GM10248 (cell line): ENCODE measurements at regions of chr7 and their contacts with region 1.

Region 1: GRCh38 chr7:157250605-157251228 is 86.1 kb upstream of the DNAJB6 start:
- DNase-seq: peak; percentile 65
- CTCF ChIP-seq: peak; percentile 76

Region 2: GRCh38 chr7:156969972-156970420 is 280.7 kb before region 1 on chr7:
- CTCF ChIA-PET with region 1: interaction called, 29 read pairs
- POLR2A ChIA-PET with region 1: no interaction called
- DNase-seq: no peak
- CTCF ChIP-seq: peak; percentile 0

Region 3: DNA sequence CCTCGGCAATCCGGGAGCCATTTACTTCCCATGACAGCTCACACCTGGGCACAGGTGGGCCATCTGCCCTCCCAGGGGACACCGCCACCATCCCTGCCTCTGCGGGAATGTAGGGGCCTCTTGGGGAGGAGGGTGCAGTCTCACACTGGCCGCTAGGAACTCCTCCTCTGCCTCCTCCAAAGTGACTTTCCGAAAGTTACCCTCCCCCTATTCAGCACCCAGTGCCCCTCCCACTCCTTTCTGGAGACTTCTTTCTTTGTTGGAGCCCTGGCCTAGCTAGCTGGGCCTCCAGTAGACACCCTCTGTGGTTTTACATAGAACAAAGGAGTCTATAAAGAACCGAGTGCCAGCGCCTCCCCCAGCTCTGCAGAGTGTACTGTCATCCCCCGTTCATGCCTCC is 194.5 kb before region 1 on chr7:
- CTCF ChIA-PET with region 1: no interaction called
- POLR2A ChIA-PET with region 1: no interaction called
- DNase-seq: no peak
- CTCF ChIP-seq: no peak

Region 4: DNA sequence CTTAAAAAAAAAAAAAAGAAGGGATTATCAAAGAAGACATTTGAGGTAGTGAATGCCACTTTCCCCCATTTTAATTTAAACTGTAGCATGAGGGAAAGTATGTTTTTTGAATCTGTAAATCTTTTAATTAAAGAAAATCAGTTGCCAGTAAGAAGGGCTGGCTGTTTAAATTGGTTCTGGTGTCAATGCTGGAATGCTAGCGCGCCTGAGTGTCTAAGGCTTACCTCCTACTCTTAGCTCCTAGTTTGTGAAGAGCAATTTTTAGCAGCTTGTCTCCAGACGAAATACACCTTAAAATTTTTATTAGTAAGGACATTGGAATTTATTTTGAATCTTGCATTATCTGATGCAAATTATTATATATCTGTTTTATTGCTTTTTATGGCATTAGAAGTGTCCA is 57.9 kb before region 1 on chr7:
- CTCF ChIA-PET with region 1: no interaction called
- POLR2A ChIA-PET with region 1: no interaction called
- DNase-seq: no peak
- CTCF ChIP-seq: no peak

Region 5: DNA sequence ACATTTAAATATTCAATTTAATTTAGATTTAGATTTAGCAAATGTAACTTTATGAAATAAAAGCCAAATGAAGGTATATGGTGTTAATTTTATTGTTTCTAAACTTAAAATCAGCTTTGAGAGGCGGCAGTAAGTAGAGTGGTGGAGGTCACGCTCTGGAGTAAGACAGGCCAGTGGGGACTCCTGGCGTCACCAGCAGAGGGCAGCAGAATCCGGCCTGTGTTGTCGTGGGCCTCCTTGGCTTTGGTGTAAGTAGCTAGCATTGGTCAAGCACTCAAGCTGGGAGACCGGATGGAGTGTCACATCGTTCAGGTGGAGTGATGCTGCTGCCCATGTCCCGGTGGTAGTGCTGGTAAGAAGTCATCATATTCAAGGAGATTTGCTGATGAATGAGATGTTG is 12.6 kb before region 1 on chr7:
- CTCF ChIA-PET with region 1: interaction called, 21 read pairs
- POLR2A ChIA-PET with region 1: no interaction called
- DNase-seq: no peak
- CTCF ChIP-seq: peak; percentile 4

Region 6: DNA sequence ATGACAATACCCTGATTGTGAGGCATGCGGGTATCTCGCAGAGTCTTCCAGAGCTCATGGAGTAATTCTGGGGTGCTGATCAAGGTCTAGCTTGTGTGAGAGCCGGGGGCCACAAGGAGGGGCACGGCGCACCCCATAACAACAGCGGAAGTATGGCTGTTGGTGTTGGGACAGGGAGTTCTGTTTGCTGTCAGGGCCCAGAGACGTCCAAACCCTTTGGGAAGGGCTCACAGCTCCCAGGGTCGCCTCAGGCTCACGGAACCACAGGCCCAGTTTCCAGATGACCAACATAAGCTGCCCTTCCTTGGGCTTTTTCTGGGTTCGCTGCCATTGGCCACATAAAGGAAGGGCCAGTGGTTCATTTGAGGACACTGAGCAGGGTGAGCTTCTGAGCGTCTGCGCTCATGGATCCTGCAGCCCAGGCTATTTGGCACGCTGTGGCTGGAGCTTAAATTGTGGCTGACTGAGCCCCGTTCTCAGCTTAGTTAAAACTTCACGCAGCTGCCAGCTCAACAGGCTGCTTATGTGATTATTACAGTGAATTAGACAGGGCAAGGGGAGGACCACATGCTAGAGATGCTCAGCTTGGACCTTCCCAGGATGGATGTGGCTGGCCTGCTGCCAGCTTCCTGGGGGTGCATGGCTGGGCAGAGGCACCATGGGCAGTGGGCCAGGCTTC is 178.4 kb after region 1 on chr7:
- CTCF ChIA-PET with region 1: no interaction called
- POLR2A ChIA-PET with region 1: no interaction called
- DNase-seq: no peak
- CTCF ChIP-seq: no peak